ENCODE measurements at regions of chr5 and their contacts with region 1.

Region 1: GRCh38 chr5:32232441-32233219 is 58.5 kb upstream of the GOLPH3 start:
- DNase-seq: peak; percentile 37 to 86
- H3K4me3 ChIP-seq: no peak overlapping the region
- H3K27ac ChIP-seq: peak overlapping the region; percentile 58 to 65
- H3K4me1 ChIP-seq: peaks cover 0 to 22% of the 10 kb centered on the region in 2 donors
- H3K27me3 ChIP-seq: no peaks in the 10 kb centered on the region
- CTCF ChIP-seq: peak; percentile 73 to 80 (median 78)

Region 2: DNA sequence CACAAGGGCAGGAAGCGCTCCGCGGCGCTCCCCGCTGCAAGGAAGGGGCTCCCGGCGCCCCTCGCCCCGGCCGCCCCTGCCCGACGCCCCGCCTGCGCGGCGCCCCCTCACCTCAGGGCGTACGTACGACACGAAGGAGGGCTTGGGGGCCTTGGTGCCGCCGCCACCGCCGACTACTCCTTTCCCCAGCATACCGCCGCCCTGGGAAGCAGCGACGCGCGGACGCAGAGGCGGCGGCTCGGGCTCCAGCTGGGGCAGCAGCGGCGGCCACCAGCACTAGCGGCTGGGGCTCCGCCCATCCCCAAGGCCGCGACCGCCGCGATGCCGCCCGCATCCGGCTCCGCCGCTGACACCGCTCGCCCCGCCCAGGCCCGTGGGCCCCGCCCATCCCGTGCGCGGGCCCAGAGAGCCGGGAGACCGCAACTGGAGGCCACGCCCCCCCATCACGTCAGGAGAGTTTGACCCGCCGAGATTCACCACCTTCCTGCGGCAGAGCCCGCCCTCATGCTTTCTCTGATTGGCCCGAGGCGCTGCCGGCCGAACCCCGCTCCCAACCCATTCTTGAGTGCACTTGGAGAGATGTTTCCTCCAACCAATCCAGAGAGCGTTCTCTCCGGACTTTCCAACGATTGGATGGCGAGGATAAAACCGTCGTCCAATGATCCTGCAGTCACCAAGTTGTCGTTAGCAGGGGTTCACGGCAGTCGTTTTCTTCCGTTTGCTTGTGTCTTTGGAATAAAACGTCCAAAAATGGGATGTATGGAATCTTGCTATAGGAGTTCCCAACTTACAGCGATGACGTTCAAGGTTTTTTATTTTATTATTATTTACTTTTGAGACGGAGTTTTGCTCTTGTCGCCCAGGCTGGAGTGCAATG is 80.3 kb after region 1 on chr5 and contains the start of gene MTMR12:
- intact Hi-C with region 1: loop called (anchors 5 kb)
- DNase-seq: peak; percentile 99 to 100
- H3K4me3 ChIP-seq: peak within 1 kb of the TSS; percentile 80 to 95
- H3K27ac ChIP-seq: peak within 1 kb of the TSS; percentile 94 to 95
- H3K4me1 ChIP-seq: peaks cover 6 to 14% of the 10 kb centered on the region in 2 donors
- H3K27me3 ChIP-seq: no peaks in the 10 kb centered on the region
- CTCF ChIP-seq: no peak
- total RNA-seq, gene MTMR12: 19.5 TPM

Region 3: GRCh38 chr5:32329308-32329834 is 96.7 kb after region 1 on chr5:
- intact Hi-C with region 1: loop called (anchors 1 kb)
- DNase-seq: peak in 1 of 2 donors; percentile 68
- H3K4me3 ChIP-seq: no peak overlapping the region
- H3K27ac ChIP-seq: no peak overlapping the region
- H3K4me1 ChIP-seq: no peaks in the 10 kb centered on the region
- H3K27me3 ChIP-seq: no peaks in the 10 kb centered on the region
- CTCF ChIP-seq: peak; percentile 47 to 64 (median 54)

Region 4: DNA sequence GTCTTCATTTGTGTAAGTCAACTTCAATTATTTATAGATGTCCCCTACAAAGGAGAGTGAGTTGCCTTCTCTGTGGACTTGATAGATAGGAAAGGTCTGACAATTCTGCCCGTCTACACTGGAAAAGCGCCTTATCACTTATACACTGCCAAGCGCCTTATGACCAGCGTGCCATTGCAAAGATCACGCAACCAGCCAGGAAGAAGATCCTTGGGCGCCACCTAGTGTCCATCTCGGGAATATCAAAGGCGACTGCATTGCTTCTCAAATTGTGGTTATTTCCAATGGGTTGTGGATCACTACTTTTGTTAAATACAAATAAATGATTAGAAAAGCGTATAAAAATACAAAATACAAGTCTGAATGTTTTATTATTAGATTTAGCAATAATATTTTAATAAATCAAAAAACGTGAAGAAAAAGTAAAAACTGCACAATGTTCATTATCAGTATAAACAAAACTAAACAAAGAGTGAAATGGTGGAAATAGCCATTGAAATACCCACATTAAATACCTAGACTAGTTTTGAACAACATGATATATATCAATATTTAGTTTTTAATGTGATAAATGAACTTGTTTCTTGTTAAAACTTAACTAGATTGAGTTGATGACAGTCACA is 380.5 kb after region 1 on chr5:
- intact Hi-C with region 1: loop called (anchors 10 kb)
- DNase-seq: peak; percentile 37 to 92
- H3K4me3 ChIP-seq: no peak overlapping the region
- H3K27ac ChIP-seq: peak overlapping the region; percentile 51 to 59
- H3K4me1 ChIP-seq: peaks cover 3 to 13% of the 10 kb centered on the region in 2 donors
- H3K27me3 ChIP-seq: no peaks in the 10 kb centered on the region
- CTCF ChIP-seq: peak; percentile 71 to 91 (median 85)

Measured in ascending aorta (tissue), 2 donors.